RWPE1 (cell line): ENCODE measurements at regions of chr18 and their contacts with region 1.

Region 1: DNA sequence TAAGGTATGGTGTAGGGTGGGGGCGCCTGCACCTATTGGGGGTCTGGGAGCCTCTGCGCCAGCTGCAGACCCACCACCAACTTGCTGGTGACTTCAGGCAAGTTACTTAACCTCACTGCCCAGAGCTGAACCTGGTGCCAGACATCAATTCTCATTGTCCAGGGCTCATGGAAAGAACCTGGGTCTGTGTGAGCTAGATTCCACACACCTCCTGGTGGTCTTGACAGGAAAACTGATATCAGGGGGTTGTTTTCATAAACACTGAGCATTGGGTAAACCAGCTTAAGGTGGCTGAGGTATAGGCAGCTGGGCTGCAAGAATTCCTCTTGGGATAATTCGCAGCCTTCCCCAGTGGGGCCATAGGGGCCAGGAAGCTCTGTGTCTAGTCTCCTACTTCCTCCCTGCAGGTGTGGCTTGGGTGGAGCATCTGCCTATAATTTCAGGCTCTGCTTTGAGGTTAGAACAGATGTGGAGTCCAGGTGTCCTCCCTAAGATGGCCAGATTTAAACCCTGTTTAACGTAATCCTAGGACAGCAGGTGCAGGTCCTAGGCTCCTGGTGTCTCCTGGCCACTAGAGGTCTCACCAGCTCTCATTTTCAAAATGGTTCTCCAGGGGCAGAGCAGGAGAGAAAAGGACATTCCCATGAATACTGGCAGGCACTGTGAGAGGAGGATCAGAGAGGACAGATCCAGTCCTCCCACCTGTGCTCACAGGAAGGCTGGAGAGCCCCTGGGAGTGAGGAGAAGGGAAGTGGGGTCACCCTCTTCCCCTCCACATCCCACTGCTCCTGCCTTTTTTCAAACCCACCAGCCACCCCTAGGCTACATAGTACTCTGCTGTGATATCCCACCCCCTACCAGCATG is 100.4 kb upstream of the SMAD2 start:
- DNase-seq: peak; percentile 44
- H3K27ac ChIP-seq: no peak overlapping the region; the same call in 1 of the 2 replicates
- CTCF ChIP-seq: peak; percentile 81

Region 2: GRCh38 chr18:47604021-47604420 is 426.8 kb before region 1 on chr18:
- CTCF ChIA-PET with region 1: no interaction called
- POLR2A ChIA-PET with region 1: no interaction called
- DNase-seq: no peak
- H3K27ac ChIP-seq: no peak overlapping the region
- CTCF ChIP-seq: no peak

Region 3: DNA sequence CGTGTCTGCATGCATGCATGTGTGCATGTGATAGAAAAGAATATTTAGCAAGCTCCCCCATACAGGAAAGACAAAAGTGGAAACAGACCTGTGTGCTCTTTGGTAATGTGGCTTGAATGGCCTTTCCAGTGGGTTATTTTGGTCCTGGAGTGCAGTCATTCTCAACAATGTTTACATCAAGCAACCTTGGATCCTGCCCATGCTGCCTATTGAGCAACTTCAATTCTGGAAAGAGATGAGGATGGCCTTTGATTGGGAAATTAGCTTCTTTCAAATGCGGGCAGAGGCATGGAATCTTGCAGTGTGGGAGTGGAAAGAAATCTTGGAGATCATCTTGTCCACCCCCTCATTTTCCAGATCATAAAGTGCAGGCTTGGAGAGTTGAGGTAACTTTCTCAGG is 13.2 kb before region 1 on chr18:
- CTCF ChIA-PET with region 1: no interaction called
- POLR2A ChIA-PET with region 1: interaction called, 11 read pairs
- DNase-seq: no peak
- H3K27ac ChIP-seq: no peak overlapping the region
- CTCF ChIP-seq: no peak

Region 4: GRCh38 chr18:48085781-48086487 is 55.1 kb after region 1 on chr18:
- CTCF ChIA-PET with region 1: no interaction called
- POLR2A ChIA-PET with region 1: no interaction called
- DNase-seq: no peak
- H3K27ac ChIP-seq: no peak overlapping the region
- CTCF ChIP-seq: no peak

Region 5: DNA sequence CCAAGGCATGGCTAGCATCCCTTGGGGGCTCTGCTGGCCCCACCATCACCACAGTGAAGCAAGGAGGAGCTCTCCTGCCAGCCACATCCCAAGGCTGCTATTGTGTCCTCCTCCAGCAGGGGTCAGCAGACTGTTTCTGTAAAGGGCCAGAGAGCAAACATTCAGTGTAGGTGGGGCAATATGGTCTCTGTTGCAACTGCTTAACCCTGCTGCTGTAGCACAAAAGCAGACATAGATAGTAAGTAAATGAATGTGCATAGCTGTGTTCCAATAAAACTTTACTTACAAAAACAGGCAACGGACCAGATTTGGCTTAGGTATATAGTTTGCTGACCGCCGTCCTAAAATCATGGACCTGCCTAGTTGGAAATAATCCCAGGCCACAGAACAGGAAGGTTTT is 414.7 kb after region 1 on chr18:
- CTCF ChIA-PET with region 1: interaction called, 15 read pairs
- POLR2A ChIA-PET with region 1: no interaction called
- DNase-seq: peak; percentile 30
- H3K27ac ChIP-seq: no peak overlapping the region
- CTCF ChIP-seq: peak; percentile 75